ENCODE measurements at regions of chr1 and their contacts with region 1.

Region 1: DNA sequence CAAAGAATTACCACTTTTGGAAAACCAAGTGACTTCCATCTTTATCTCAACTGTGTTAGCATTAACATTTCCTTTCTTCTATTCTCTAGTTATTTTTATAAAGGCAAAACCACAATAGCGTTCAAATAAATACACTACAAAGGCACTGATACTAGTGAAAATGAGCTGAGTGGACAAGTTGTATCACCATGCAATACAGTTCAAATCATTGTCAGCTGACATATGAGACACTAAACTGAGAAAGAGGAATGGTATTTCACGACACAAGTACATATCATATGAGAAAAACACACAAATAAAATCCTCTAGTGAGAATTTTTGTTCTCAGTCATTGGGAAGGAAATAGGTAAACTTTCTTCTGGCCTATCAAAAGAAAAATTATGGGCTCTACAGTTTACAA is 26.2 kb downstream of the ENAH start:
- ATAC-seq: no peak
- H3K4me3 ChIP-seq: no peak overlapping the region
- H3K27ac ChIP-seq: no peak overlapping the region
- H3K4me1 ChIP-seq: peaks cover 2 to 4% of the 10 kb centered on the region in 2 donors

Region 2: DNA sequence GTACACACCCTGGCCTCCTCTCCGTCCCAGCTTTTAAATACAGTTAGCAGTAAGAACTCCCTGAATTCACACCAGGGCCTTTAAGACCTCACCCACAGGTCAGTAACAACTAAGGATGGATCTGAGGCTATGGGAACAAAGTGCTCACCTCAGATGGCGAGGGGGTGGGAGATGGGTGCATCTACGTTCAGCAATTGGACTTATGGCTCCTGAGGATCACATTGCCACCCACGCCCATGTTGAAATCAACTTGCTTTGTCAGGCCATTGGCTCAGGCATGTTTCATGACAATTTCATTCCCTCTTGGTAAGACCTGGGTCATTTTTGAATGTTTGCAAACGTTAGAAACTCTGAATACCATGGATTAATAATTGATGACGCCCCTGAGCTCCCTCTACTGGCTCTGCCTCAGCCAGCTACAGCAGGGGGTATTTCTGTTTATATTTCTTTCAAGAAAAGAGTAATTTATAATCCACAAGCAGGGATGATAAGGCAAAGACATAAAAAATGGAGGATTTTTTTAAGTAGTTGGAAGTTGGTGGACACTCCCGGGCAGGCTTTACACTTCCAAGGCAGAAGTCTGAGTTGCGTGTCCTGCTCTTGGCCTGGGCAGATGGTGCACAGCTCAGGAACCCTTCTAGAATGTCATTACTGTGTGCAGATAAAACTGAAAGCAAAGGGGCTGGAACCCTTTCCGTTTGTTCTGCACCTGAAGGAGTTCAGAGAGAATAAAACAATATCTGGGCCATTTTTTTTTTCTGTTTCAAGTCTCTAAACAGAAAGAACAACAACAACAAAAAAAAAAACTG is 185.2 kb before region 1 on chr1:
- in situ Hi-C with region 1: no loop called
- ATAC-seq: no peak
- H3K4me3 ChIP-seq: no peak overlapping the region
- H3K27ac ChIP-seq: no peak overlapping the region
- H3K4me1 ChIP-seq: no peaks in the 10 kb centered on the region

Region 3: DNA sequence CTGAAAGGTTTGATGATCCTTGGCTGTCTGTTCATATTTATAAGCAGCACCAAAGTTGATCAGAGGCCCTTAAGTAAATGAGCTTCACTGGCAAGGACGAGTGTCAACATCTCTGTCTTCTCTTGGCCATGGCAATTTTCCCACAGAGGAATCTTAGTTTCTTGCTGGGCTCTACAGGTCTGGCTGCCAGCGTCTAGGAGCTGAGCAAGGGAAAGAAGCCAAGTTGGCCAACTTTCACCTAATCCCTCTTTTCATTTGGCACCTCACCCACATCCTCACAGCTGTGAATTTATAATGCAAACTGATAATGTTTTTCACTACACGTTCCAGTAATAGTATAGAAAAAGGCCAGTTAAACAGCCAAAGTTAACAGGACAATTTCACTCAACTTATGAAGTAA is 99.8 kb before region 1 on chr1:
- in situ Hi-C with region 1: loop called in 1 of 9 experiments (anchors 25 kb)
- ATAC-seq: peak in 1 of 8 experiments; percentile 59
- H3K4me3 ChIP-seq: no peak overlapping the region
- H3K27ac ChIP-seq: no peak overlapping the region
- H3K4me1 ChIP-seq: no peaks in the 10 kb centered on the region

Region 4: GRCh38 chr1:225731491-225731890 is 104.8 kb after region 1 on chr1:
- in situ Hi-C with region 1: no loop called
- ATAC-seq: peak in 1 of 8 experiments; percentile 16
- H3K4me3 ChIP-seq: no peak overlapping the region
- H3K27ac ChIP-seq: no peak overlapping the region
- H3K4me1 ChIP-seq: peaks cover 0 to 9% of the 10 kb centered on the region in 2 donors

Measured in motor neuron (in vitro differentiated cells).